ENCODE measurements at regions of chr5 and their contacts with region 1.

Region 1: DNA sequence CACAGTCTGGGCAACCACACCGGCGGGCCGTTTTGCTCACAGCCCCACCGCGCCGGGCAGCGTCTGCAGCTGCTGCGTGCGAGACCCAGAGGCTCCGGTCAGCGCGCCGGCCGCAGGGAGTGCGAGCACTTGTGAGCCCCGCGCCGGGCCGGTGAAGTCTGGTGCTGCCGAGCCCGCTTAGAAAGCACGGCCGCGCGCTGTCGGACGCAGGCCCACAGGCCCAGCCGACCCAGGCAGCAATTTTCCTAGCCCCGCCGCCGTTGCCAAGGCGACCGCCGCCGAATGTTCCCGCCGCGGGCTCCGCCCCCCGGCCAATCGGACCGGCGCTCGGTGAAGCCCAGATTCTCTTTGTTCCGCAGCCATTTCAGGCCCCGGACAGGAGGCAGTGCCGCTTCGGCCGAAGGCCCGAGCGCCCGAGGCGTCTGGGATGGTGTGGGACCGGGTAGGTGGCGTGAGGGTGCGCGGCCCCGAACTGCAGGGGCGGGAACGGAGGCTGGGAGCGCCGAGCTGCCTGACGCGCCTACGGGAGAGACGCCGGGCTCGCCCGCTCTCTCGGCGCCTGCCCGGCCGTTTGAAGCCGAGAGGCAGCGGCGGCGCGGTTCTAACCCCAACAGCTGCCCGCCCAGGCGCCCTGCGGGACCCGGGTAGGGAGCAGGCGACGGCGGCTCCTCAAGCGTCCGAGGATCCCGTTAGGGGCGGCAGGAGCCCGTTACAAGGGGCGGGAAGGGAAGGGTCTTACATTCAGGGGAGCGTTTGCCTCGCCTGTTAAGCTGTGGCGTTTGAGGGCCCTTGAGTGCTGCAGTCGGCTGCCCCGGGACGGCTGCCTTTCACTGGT is at the start of gene TNPO1:
- DNase-seq: peak; percentile 95 to 98 (median 98)
- ATAC-seq: peak; percentile 98
- H3K4me3 ChIP-seq: peak within 1 kb of the TSS; percentile 86
- H3K27ac ChIP-seq: peak within 1 kb of the TSS; percentile 99
- H3K4me1 ChIP-seq: no peaks in the 10 kb centered on the region
- H3K27me3 ChIP-seq: no peaks in the 10 kb centered on the region
- total RNA-seq, gene TNPO1: 68.2 to 73.8 (median 71.6) TPM

Region 2: GRCh38 chr5:71996789-71997188 is 819.7 kb before region 1 on chr5:
- intact Hi-C with region 1: no loop called
- DNase-seq: no peak
- ATAC-seq: no peak
- H3K4me3 ChIP-seq: no peak overlapping the region
- H3K27ac ChIP-seq: no peak overlapping the region
- H3K4me1 ChIP-seq: no peaks in the 10 kb centered on the region
- H3K27me3 ChIP-seq: no peaks in the 10 kb centered on the region

Region 3: GRCh38 chr5:72366324-72366976 is 450.1 kb before region 1 on chr5:
- intact Hi-C with region 1: loop called in 2 of 4 experiments (anchors 10 kb)
- DNase-seq: peak; percentile 44 to 83 (median 56)
- ATAC-seq: peak; percentile 89 to 90
- H3K4me3 ChIP-seq: no peak overlapping the region
- H3K27ac ChIP-seq: no peak overlapping the region
- H3K4me1 ChIP-seq: no peaks in the 10 kb centered on the region
- H3K27me3 ChIP-seq: no peaks in the 10 kb centered on the region

Region 4: DNA sequence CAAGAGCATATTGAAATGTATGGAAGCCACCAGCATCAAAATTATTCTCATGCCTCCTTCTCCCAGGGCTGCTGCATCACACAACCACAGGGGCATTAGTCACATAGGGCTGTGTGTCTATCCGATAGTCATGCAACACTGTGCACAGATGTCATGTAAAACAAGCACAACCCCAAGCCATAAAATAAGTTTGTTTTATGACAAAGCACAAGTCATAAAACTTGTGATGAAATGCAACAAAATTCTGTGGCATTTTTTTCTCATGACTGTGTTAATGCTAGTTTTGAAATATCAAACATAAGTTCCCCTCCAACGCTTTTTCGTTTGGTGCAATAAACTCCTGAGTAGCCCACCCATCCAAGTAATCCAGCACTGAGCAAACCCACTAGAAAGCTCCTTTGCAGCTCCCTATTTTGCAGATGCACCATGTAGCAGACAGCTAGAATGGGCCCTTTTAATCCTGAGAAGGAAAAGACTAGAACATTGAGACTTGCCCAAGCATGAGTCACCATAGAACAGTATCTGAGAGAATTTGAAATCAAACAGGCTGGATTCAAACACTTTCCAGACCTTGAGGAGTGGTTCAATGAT is 216.0 kb before region 1 on chr5:
- intact Hi-C with region 1: loop called in 1 of 4 experiments (anchors 10 kb)
- DNase-seq: no peak
- ATAC-seq: no peak
- H3K4me3 ChIP-seq: no peak overlapping the region
- H3K27ac ChIP-seq: no peak overlapping the region
- H3K4me1 ChIP-seq: peaks cover 5% of the 10 kb centered on the region
- H3K27me3 ChIP-seq: no peaks in the 10 kb centered on the region

Region 5: GRCh38 chr5:72611118-72611730 is 205.3 kb before region 1 on chr5:
- intact Hi-C with region 1: loop called in 3 of 4 experiments (anchors 2 to 10 kb)
- DNase-seq: peak; percentile 80 to 90 (median 88)
- ATAC-seq: peak; percentile 97 to 98
- H3K4me3 ChIP-seq: no peak overlapping the region
- H3K27ac ChIP-seq: no peak overlapping the region
- H3K4me1 ChIP-seq: no peaks in the 10 kb centered on the region
- H3K27me3 ChIP-seq: no peaks in the 10 kb centered on the region

Region 6: GRCh38 chr5:72988769-72989168 is 172.2 kb after region 1 on chr5:
- intact Hi-C with region 1: no loop called
- DNase-seq: no peak
- ATAC-seq: no peak
- H3K4me3 ChIP-seq: no peak overlapping the region
- H3K27ac ChIP-seq: no peak overlapping the region
- H3K4me1 ChIP-seq: no peaks in the 10 kb centered on the region
- H3K27me3 ChIP-seq: no peaks in the 10 kb centered on the region